ENCODE measurements at regions of chr20 and their contacts with region 1.

Region 1: GRCh38 chr20:7285918-7286556 is 518.6 kb downstream of the BMP2 start:
- DNase-seq: peak; percentile 12
- ATAC-seq: peak; percentile 96
- H3K4me3 ChIP-seq: no peak overlapping the region
- H3K27ac ChIP-seq: no peak overlapping the region
- H3K4me1 ChIP-seq: no peaks in the 10 kb centered on the region
- H3K27me3 ChIP-seq: no peaks in the 10 kb centered on the region
- CTCF ChIP-seq: peak; percentile 66 to 83 (median 74)
- EP300 ChIP-seq: no peak
- POLR2A ChIP-seq: no peak
- RAD21 ChIP-seq: peak; percentile 72

Region 2: GRCh38 chr20:6142348-6142993 is 1143.6 kb before region 1 on chr20:
- CTCF ChIA-PET with region 1: interaction called, 3 read pairs
- POLR2A ChIA-PET with region 1: no interaction called
- RAD21 ChIA-PET with region 1: no interaction called
- SMC1A ChIA-PET with region 1: no interaction called
- in situ Hi-C with region 1: loop called (anchors 10 kb)
- intact Hi-C with region 1: loop called (anchors 2 kb)
- DNase-seq: peak; percentile 9
- ATAC-seq: peak; percentile 91
- H3K4me3 ChIP-seq: no peak overlapping the region
- H3K27ac ChIP-seq: no peak overlapping the region
- H3K4me1 ChIP-seq: no peaks in the 10 kb centered on the region
- H3K27me3 ChIP-seq: no peaks in the 10 kb centered on the region
- CTCF ChIP-seq: peak; percentile 71 to 84 (median 76); a peak in 5 of 6 replicates
- EP300 ChIP-seq: no peak
- POLR2A ChIP-seq: no peak
- RAD21 ChIP-seq: peak; percentile 68

Region 3: GRCh38 chr20:6828794-6829423 is 457.1 kb before region 1 on chr20:
- CTCF ChIA-PET with region 1: interaction called, 46 read pairs
- POLR2A ChIA-PET with region 1: no interaction called
- RAD21 ChIA-PET with region 1: interaction called, 16 read pairs
- SMC1A ChIA-PET with region 1: interaction called, 11 read pairs
- in situ Hi-C with region 1: no loop called
- intact Hi-C with region 1: loop called (anchors 2 kb)
- DNase-seq: peak; percentile 30
- ATAC-seq: peak; percentile 92
- H3K4me3 ChIP-seq: no peak overlapping the region
- H3K27ac ChIP-seq: no peak overlapping the region
- H3K4me1 ChIP-seq: no peaks in the 10 kb centered on the region
- H3K27me3 ChIP-seq: no peaks in the 10 kb centered on the region; a peak in 1 of 4 replicates
- CTCF ChIP-seq: peak; percentile 57 to 72 (median 63)
- EP300 ChIP-seq: no peak
- POLR2A ChIP-seq: no peak
- RAD21 ChIP-seq: peak; percentile 75

Region 4: GRCh38 chr20:7031222-7031621 is 254.8 kb before region 1 on chr20:
- CTCF ChIA-PET with region 1: interaction called, 16 read pairs
- POLR2A ChIA-PET with region 1: no interaction called
- RAD21 ChIA-PET with region 1: no interaction called
- SMC1A ChIA-PET with region 1: interaction called, 6 read pairs
- in situ Hi-C with region 1: no loop called
- intact Hi-C with region 1: no loop called
- DNase-seq: no peak
- ATAC-seq: peak; percentile 62
- H3K4me3 ChIP-seq: no peak overlapping the region
- H3K27ac ChIP-seq: no peak overlapping the region
- H3K4me1 ChIP-seq: no peaks in the 10 kb centered on the region
- H3K27me3 ChIP-seq: no peaks in the 10 kb centered on the region
- CTCF ChIP-seq: peak; percentile 23 to 33 (median 24); a peak in 2 of 6 replicates
- EP300 ChIP-seq: no peak
- POLR2A ChIP-seq: no peak
- RAD21 ChIP-seq: peak; percentile 35

Region 5: GRCh38 chr20:7113577-7114466 is 172.2 kb before region 1 on chr20:
- CTCF ChIA-PET with region 1: interaction called, 49 read pairs
- POLR2A ChIA-PET with region 1: interaction called, 3 read pairs
- RAD21 ChIA-PET with region 1: interaction called, 31 read pairs
- SMC1A ChIA-PET with region 1: interaction called, 14 read pairs
- in situ Hi-C with region 1: no loop called
- intact Hi-C with region 1: loop called (anchors 5 kb)
- DNase-seq: no peak
- ATAC-seq: peak; percentile 98
- H3K4me3 ChIP-seq: no peak overlapping the region
- H3K27ac ChIP-seq: no peak overlapping the region
- H3K4me1 ChIP-seq: no peaks in the 10 kb centered on the region
- H3K27me3 ChIP-seq: no peaks in the 10 kb centered on the region
- CTCF ChIP-seq: peak; percentile 12 to 54 (median 39); a peak in 4 of 6 replicates
- EP300 ChIP-seq: no peak
- POLR2A ChIP-seq: no peak
- RAD21 ChIP-seq: peak; percentile 28; the same call in 1 of the 2 replicates

Region 6: GRCh38 chr20:7272512-7272911 is 13.5 kb before region 1 on chr20:
- CTCF ChIA-PET with region 1: interaction called, 13 read pairs
- POLR2A ChIA-PET with region 1: no interaction called
- RAD21 ChIA-PET with region 1: interaction called, 7 read pairs
- SMC1A ChIA-PET with region 1: interaction called, 4 read pairs
- in situ Hi-C with region 1: no loop called
- intact Hi-C with region 1: no loop called
- DNase-seq: no peak
- ATAC-seq: no peak
- H3K4me3 ChIP-seq: no peak overlapping the region
- H3K27ac ChIP-seq: no peak overlapping the region
- H3K4me1 ChIP-seq: no peaks in the 10 kb centered on the region
- H3K27me3 ChIP-seq: no peaks in the 10 kb centered on the region
- CTCF ChIP-seq: no peak; a peak in 1 of 6 replicates
- EP300 ChIP-seq: no peak
- POLR2A ChIP-seq: no peak
- RAD21 ChIP-seq: no peak

Region 7: GRCh38 chr20:7333841-7334240 is 47.8 kb after region 1 on chr20:
- CTCF ChIA-PET with region 1: no interaction called
- POLR2A ChIA-PET with region 1: no interaction called
- RAD21 ChIA-PET with region 1: no interaction called
- SMC1A ChIA-PET with region 1: no interaction called
- in situ Hi-C with region 1: no loop called
- intact Hi-C with region 1: no loop called
- DNase-seq: no peak
- ATAC-seq: no peak
- H3K4me3 ChIP-seq: no peak overlapping the region
- H3K27ac ChIP-seq: no peak overlapping the region
- H3K4me1 ChIP-seq: no peaks in the 10 kb centered on the region
- H3K27me3 ChIP-seq: no peaks in the 10 kb centered on the region
- CTCF ChIP-seq: no peak
- EP300 ChIP-seq: no peak
- POLR2A ChIP-seq: no peak
- RAD21 ChIP-seq: no peak

Region 8: GRCh38 chr20:7608250-7608649 is 322.2 kb after region 1 on chr20:
- CTCF ChIA-PET with region 1: no interaction called
- POLR2A ChIA-PET with region 1: no interaction called
- RAD21 ChIA-PET with region 1: no interaction called
- SMC1A ChIA-PET with region 1: no interaction called
- in situ Hi-C with region 1: no loop called
- intact Hi-C with region 1: no loop called
- DNase-seq: no peak
- ATAC-seq: no peak
- H3K4me3 ChIP-seq: no peak overlapping the region
- H3K27ac ChIP-seq: no peak overlapping the region
- H3K4me1 ChIP-seq: no peaks in the 10 kb centered on the region
- H3K27me3 ChIP-seq: no peaks in the 10 kb centered on the region
- CTCF ChIP-seq: no peak
- EP300 ChIP-seq: no peak
- POLR2A ChIP-seq: no peak
- RAD21 ChIP-seq: no peak

Measured in GM12878 (cell line).